Gastrocnemius medialis (tissue), 4 donors: ENCODE measurements at regions of chr2 and their contacts with region 1.

Region 1: GRCh38 chr2:23524261-23524706 is 139.3 kb downstream of the KLHL29 start:
- DNase-seq: peak; percentile 91 to 98
- ATAC-seq: peak; percentile 77 to 78
- H3K4me3 ChIP-seq: peak overlapping the region; percentile 42 to 55 (median 46)
- H3K27ac ChIP-seq: peak overlapping the region; percentile 93 to 97 (median 96)
- H3K4me1 ChIP-seq: peaks cover 54 to 56% of the 10 kb centered on the region in 2 donors
- H3K27me3 ChIP-seq: no peaks in the 10 kb centered on the region
- CTCF ChIP-seq: peak in 1 of 5 experiments; percentile 12
- POLR2A ChIP-seq: peak; percentile 73 to 89

Region 2: GRCh38 chr2:23249348-23249747 is 274.9 kb before region 1 on chr2:
- in situ Hi-C with region 1: no loop called
- intact Hi-C with region 1: no loop called
- DNase-seq: peak; percentile 33 to 63
- ATAC-seq: peak; percentile 65 to 81
- H3K4me3 ChIP-seq: no peak overlapping the region
- H3K27ac ChIP-seq: peak overlapping the region in 1 of 4 donors; percentile 17
- H3K4me1 ChIP-seq: peaks cover 0 to 23% of the 10 kb centered on the region in 2 donors
- H3K27me3 ChIP-seq: no peaks in the 10 kb centered on the region
- CTCF ChIP-seq: no peak
- POLR2A ChIP-seq: no peak

Region 3: DNA sequence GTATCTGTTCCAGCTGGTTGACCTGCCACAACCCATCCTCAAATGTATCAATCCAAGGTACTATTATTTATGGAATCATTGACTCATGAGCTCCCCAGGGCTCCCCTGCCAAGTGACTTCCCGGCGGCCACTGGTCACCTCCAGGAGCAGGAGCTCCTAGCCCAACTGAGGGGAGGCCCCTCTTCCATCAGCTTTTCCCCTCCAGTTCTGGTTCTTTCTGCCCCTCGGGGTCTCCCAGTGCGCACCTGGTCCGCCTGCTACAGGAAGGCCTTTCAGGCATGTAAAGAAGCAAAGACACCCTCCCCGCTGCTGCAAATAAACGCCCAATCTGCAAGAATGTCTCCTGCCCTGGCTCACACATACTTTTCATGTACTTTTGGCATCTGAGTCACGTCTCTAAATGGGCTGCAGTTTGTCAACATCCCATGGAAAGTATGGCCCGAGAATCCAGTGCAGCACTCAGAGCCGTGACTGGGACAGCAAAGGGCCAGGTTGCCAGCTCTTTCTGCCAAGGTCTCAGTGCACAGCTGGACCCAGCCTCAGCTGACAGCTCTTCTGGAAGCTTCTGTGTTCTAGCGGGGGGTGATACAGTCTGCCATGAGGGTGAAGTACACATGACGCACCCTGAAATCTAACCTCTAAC is 97.9 kb before region 1 on chr2:
- in situ Hi-C with region 1: loop called in 1 of 4 experiments (anchors 10 kb)
- intact Hi-C with region 1: loop called (anchors 1 kb)
- DNase-seq: peak; percentile 94 to 96
- ATAC-seq: peak; percentile 79
- H3K4me3 ChIP-seq: peak overlapping the region in 2 of 4 donors; percentile 14 to 29
- H3K27ac ChIP-seq: peak overlapping the region; percentile 80 to 97 (median 90)
- H3K4me1 ChIP-seq: peaks cover 30 to 43% of the 10 kb centered on the region in 2 donors
- H3K27me3 ChIP-seq: no peaks in the 10 kb centered on the region
- CTCF ChIP-seq: no peak
- POLR2A ChIP-seq: peak in 1 of 2 donors; percentile 10

Region 4: DNA sequence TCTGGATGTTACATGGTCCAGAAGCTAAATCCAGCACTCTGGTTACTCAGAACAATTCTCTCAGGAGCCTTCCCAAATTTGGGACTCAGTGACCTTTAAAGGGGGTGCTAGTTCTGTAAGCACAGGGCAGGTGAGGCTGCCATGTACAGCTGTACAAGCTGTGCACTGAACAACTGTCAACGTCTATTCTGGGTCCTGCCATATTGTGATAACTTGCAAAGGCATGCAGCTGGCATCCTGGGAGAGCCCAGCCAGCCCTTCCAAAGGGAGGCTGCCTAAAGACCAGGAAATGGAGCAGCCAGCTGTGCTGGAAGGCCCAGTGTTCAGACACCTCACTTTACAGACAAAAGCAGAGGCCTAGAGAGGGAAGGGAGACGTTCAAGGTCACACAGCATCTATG is 65.5 kb after region 1 on chr2:
- in situ Hi-C with region 1: no loop called
- intact Hi-C with region 1: loop called (anchors 1 kb)
- DNase-seq: peak; percentile 77 to 90
- ATAC-seq: peak; percentile 72 to 81
- H3K4me3 ChIP-seq: no peak overlapping the region
- H3K27ac ChIP-seq: peak overlapping the region; percentile 83 to 93 (median 88)
- H3K4me1 ChIP-seq: peaks cover 40 to 91% of the 10 kb centered on the region in 2 donors
- H3K27me3 ChIP-seq: no peaks in the 10 kb centered on the region
- CTCF ChIP-seq: no peak
- POLR2A ChIP-seq: no peak

Region 5: DNA sequence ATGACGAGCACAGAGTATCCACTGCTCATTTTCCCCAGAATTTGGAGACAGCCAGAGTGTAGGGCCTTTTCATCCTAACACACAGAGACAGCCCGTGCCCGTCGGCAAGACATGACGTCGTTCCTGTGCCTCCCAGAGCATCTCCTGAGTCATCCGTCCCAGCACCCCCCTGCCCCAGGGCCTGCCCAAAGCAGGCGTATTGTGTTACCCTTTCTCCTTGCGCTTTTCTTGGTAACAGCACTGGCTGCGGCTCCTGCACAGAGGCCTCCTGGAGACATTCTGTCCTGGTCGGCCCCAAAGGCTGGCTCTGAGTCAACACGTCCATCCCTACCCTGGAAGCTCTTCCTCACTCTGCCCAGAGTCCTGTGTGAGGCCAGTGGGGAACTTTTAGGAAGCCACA is 77.8 kb after region 1 on chr2:
- in situ Hi-C with region 1: loop called in 1 of 4 experiments (anchors 5 kb)
- intact Hi-C with region 1: loop called (anchors 2 kb)
- DNase-seq: peak; percentile 95 to 98
- ATAC-seq: peak; percentile 91 to 92
- H3K4me3 ChIP-seq: no peak overlapping the region
- H3K27ac ChIP-seq: peak overlapping the region; percentile 84 to 96 (median 88)
- H3K4me1 ChIP-seq: peaks cover 23 to 44% of the 10 kb centered on the region in 2 donors
- H3K27me3 ChIP-seq: no peaks in the 10 kb centered on the region
- CTCF ChIP-seq: no peak
- POLR2A ChIP-seq: peak; percentile 32 to 46

Region 6: GRCh38 chr2:23734416-23734815 is 210.1 kb after region 1 on chr2:
- in situ Hi-C with region 1: no loop called
- intact Hi-C with region 1: no loop called
- DNase-seq: no peak
- ATAC-seq: no peak
- H3K4me3 ChIP-seq: no peak overlapping the region
- H3K27ac ChIP-seq: no peak overlapping the region
- H3K4me1 ChIP-seq: no peaks in the 10 kb centered on the region
- H3K27me3 ChIP-seq: no peaks in the 10 kb centered on the region
- CTCF ChIP-seq: no peak
- POLR2A ChIP-seq: no peak

Region 7: GRCh38 chr2:23745726-23746105 is 221.4 kb after region 1 on chr2:
- in situ Hi-C with region 1: loop called in 2 of 4 experiments (anchors 5 to 10 kb)
- intact Hi-C with region 1: loop called (anchors 2 kb)
- DNase-seq: peak; percentile 84 to 90
- ATAC-seq: peak; percentile 97 to 98
- H3K4me3 ChIP-seq: peak overlapping the region in 2 of 4 donors; percentile 26 to 41
- H3K27ac ChIP-seq: peak overlapping the region; percentile 88 to 94 (median 90)
- H3K4me1 ChIP-seq: peaks cover 22 to 25% of the 10 kb centered on the region in 2 donors
- H3K27me3 ChIP-seq: no peaks in the 10 kb centered on the region
- CTCF ChIP-seq: no peak
- POLR2A ChIP-seq: no peak